ENCODE measurements at regions of chr9 and their contacts with region 1.

Region 1: GRCh38 chr9:13088720-13089427 is 190.6 kb downstream of the MPDZ start:
- DNase-seq: peak; percentile 79
- H3K4me3 ChIP-seq: peak overlapping the region in 1 of 2 experiments; percentile 49; a peak in 2 of 4 replicates
- H3K27ac ChIP-seq: no peak overlapping the region
- H3K4me1 ChIP-seq: peaks cover 0 to 2% of the 10 kb centered on the region in 2 experiments; a peak in 2 of 4 replicates
- H3K27me3 ChIP-seq: no peaks in the 10 kb centered on the region
- CTCF ChIP-seq: peak; percentile 74
- EP300 ChIP-seq: no peak
- RAD21 ChIP-seq: peak; percentile 78

Region 2: GRCh38 chr9:12702160-12702758 is 386.6 kb before region 1 on chr9:
- CTCF ChIA-PET with region 1: interaction called, 16 read pairs
- POLR2A ChIA-PET with region 1: no interaction called
- DNase-seq: peak; percentile 30
- H3K4me3 ChIP-seq: peak overlapping the region in 1 of 2 experiments; percentile 41; a peak in 1 of 4 replicates
- H3K27ac ChIP-seq: no peak overlapping the region
- H3K4me1 ChIP-seq: peaks cover 0 to 14% of the 10 kb centered on the region in 2 experiments; a peak in 2 of 4 replicates
- H3K27me3 ChIP-seq: no peaks in the 10 kb centered on the region
- CTCF ChIP-seq: peak; percentile 76
- EP300 ChIP-seq: no peak
- RAD21 ChIP-seq: peak; percentile 96

Region 3: GRCh38 chr9:12980085-12980851 is 108.6 kb before region 1 on chr9:
- CTCF ChIA-PET with region 1: no interaction called
- POLR2A ChIA-PET with region 1: no interaction called
- DNase-seq: no peak
- H3K4me3 ChIP-seq: no peak overlapping the region
- H3K27ac ChIP-seq: no peak overlapping the region
- H3K4me1 ChIP-seq: no peaks in the 10 kb centered on the region
- H3K27me3 ChIP-seq: no peaks in the 10 kb centered on the region
- CTCF ChIP-seq: no peak
- EP300 ChIP-seq: no peak
- RAD21 ChIP-seq: no peak

Region 4: DNA sequence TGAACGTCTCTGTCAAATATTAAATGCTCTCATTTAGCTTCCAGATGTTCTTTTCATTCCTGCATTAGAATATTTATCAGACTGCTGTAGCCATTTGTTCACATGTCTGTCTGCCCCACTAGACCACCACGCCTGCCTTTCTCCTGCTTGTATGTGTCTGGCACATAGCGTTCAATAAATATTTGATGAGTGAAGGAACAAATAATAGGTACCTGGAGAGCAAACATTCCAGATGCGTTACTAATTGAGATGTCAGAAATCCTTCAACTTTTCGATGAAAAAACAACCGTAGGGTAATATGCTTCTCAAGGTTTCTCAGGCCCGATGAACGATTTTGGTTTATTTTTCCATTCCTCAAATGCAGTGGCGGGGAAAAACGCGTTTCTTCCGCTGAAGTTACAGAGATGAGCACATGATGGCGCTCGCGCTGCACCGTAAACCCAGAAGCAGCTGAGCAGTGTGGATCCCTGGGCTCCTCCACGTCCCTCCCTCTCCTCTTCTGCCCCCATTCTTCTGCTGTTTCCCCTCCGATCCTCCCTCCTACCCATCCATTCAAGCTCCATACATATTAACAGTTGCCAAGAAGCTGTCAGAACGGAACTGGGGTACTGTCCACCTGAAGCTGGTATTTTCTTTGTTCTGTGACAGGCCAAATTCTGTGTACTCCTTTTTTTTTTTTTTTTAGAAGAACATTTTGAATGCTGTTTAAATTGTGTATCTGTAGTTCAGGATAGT is 54.7 kb before region 1 on chr9:
- CTCF ChIA-PET with region 1: interaction called, 89 read pairs
- POLR2A ChIA-PET with region 1: no interaction called
- DNase-seq: peak; percentile 87
- H3K4me3 ChIP-seq: peak overlapping the region; percentile 24 to 56
- H3K27ac ChIP-seq: no peak overlapping the region; a peak in 1 of 4 replicates
- H3K4me1 ChIP-seq: peaks cover 0 to 2% of the 10 kb centered on the region in 2 experiments; a peak in 1 of 4 replicates
- H3K27me3 ChIP-seq: no peaks in the 10 kb centered on the region
- CTCF ChIP-seq: peak; percentile 85
- EP300 ChIP-seq: no peak
- RAD21 ChIP-seq: peak; percentile 93

Region 5: GRCh38 chr9:13071921-13072320 is 17.0 kb before region 1 on chr9:
- CTCF ChIA-PET with region 1: interaction called, 33 read pairs
- POLR2A ChIA-PET with region 1: no interaction called
- DNase-seq: no peak
- H3K4me3 ChIP-seq: no peak overlapping the region
- H3K27ac ChIP-seq: no peak overlapping the region
- H3K4me1 ChIP-seq: no peaks in the 10 kb centered on the region; a peak in 1 of 4 replicates
- H3K27me3 ChIP-seq: no peaks in the 10 kb centered on the region
- CTCF ChIP-seq: no peak
- EP300 ChIP-seq: no peak
- RAD21 ChIP-seq: no peak

Region 6: GRCh38 chr9:13078164-13078563 is 10.7 kb before region 1 on chr9:
- CTCF ChIA-PET with region 1: interaction called, 33 read pairs
- POLR2A ChIA-PET with region 1: no interaction called
- DNase-seq: no peak
- H3K4me3 ChIP-seq: no peak overlapping the region
- H3K27ac ChIP-seq: no peak overlapping the region
- H3K4me1 ChIP-seq: no peaks in the 10 kb centered on the region; a peak in 1 of 4 replicates
- H3K27me3 ChIP-seq: no peaks in the 10 kb centered on the region
- CTCF ChIP-seq: no peak
- EP300 ChIP-seq: no peak
- RAD21 ChIP-seq: no peak

Region 7: GRCh38 chr9:13100914-13101572 is 12.2 kb after region 1 on chr9:
- CTCF ChIA-PET with region 1: interaction called, 25 read pairs
- POLR2A ChIA-PET with region 1: no interaction called
- DNase-seq: no peak
- H3K4me3 ChIP-seq: no peak overlapping the region
- H3K27ac ChIP-seq: no peak overlapping the region
- H3K4me1 ChIP-seq: no peaks in the 10 kb centered on the region; a peak in 1 of 4 replicates
- H3K27me3 ChIP-seq: no peaks in the 10 kb centered on the region
- CTCF ChIP-seq: no peak
- EP300 ChIP-seq: peak in 1 of 2 experiments; percentile 55; a peak in 1 of 4 replicates
- RAD21 ChIP-seq: no peak

Measured in SK-N-SH (cell line).